ENCODE measurements at regions of chr9 and their contacts with region 1.

Region 1: GRCh38 chr9:35051069-35051967 is 21.1 kb downstream of the VCP start:
- DNase-seq: no peak
- ATAC-seq: peak; percentile 71
- H3K4me3 Mint-ChIP-seq: no peak overlapping the region
- H3K27ac Mint-ChIP-seq: no peak overlapping the region
- H3K4me1 Mint-ChIP-seq: peaks cover 5% of the 10 kb centered on the region
- H3K27me3 Mint-ChIP-seq: no peaks in the 10 kb centered on the region
- CTCF ChIP-seq: no peak

Region 2: GRCh38 chr9:34665381-34666250 is 385.7 kb before region 1 on chr9:
- CTCF ChIA-PET with region 1: no interaction called
- POLR2A ChIA-PET with region 1: no interaction called
- intact Hi-C with region 1: no loop called
- DNase-seq: peak; percentile 75
- ATAC-seq: peak; percentile 90
- H3K4me3 Mint-ChIP-seq: peak overlapping the region; percentile 88
- H3K27ac Mint-ChIP-seq: peak overlapping the region; percentile 87
- H3K4me1 Mint-ChIP-seq: peaks cover 11% of the 10 kb centered on the region
- H3K27me3 Mint-ChIP-seq: no peaks in the 10 kb centered on the region
- CTCF ChIP-seq: no peak

Region 3: GRCh38 chr9:34994260-34994899 is 56.9 kb before region 1 on chr9:
- CTCF ChIA-PET with region 1: interaction called, 13 read pairs
- POLR2A ChIA-PET with region 1: no interaction called
- intact Hi-C with region 1: loop called (anchors 1 kb)
- DNase-seq: no peak
- ATAC-seq: no peak
- H3K4me3 Mint-ChIP-seq: peak overlapping the region; percentile 46
- H3K27ac Mint-ChIP-seq: peak overlapping the region; percentile 78
- H3K4me1 Mint-ChIP-seq: peaks cover 47% of the 10 kb centered on the region
- H3K27me3 Mint-ChIP-seq: peaks cover 2% of the 10 kb centered on the region
- CTCF ChIP-seq: no peak

Region 4: DNA sequence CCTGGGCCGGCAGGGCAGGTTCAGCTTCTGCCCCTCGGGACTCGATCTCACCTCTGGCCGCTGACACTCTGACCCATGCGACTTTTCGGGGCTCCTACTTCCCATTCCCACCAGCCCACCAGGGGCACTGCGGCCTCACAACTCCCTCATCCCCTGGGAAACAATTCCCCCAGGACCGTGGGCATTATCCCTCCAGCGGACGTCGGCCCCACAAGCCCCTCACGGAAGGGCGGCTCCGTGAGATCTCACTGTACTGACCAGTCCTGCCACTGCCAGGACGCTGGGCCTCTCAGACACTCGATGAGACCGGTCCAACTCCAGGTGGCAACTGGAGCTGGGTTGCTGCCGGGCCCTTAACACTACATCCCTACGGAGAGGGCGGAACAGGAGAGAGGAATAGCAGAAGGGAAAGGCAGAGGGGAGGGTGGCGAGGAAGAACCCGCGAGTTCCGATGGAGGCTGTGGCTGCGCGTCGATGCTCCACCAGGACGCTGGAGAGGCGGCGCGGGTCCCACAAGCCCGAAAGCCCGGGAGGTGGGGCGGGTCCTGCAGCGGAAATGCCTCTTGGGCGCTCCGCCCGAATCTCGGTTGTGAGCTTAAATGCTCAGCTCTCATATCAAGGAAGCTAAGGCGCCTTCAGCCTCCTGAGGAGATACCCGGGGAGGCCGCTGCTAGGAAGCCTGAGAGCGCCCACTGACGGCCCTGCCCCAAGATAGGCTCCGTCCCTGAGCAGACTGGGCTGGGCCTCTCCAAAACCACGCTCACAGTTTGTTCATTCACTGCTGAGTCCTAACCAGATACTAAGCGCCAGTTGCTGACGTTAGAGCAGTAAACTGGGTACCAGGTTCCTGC is 15.2 kb before region 1 on chr9:
- CTCF ChIA-PET with region 1: interaction called, 3 read pairs
- POLR2A ChIA-PET with region 1: interaction called, 3 read pairs
- intact Hi-C with region 1: loop called (anchors 1 kb)
- DNase-seq: no peak
- ATAC-seq: peak; percentile 40
- H3K4me3 Mint-ChIP-seq: peak overlapping the region; percentile 50
- H3K27ac Mint-ChIP-seq: no peak overlapping the region
- H3K4me1 Mint-ChIP-seq: peaks cover 4% of the 10 kb centered on the region
- H3K27me3 Mint-ChIP-seq: no peaks in the 10 kb centered on the region
- CTCF ChIP-seq: no peak

Region 5: DNA sequence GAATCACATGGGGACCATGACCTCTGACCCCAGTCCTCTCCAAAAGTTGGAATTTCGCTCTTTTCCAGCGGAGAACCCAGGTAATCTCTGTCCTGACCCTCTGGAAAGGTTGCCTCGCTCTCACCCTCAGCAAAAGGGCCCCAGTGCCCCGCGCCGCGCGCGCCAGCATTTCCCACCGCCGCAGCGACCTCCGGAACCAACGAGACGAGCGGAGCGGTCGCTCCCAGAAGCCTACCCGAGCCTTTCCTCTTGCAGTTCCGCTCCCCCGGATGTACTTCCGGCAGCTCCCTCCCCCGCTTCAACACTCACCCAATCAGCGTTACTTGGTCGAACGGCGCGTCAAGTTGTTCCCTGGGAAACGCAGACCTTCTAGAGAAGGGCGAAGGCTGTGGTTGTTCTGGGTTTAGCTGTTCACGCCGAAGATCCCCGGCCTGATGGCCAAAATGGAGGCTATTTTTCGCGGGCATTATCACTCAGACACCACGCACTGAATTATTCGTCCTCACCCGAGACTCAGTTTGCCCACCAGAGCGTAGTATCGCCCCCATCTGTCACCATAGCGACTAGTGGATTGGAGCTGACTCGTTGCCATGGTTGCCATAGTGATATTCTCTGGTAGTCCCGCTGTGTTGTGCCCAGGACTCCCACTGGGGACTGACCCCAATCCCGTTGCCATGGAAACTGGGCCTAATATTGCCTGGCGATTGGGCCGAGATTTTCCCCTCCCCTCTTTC is 51.8 kb after region 1 on chr9 and contains the start of gene STOML2:
- CTCF ChIA-PET with region 1: no interaction called
- POLR2A ChIA-PET with region 1: no interaction called
- intact Hi-C with region 1: no loop called
- DNase-seq: peak; percentile 82
- ATAC-seq: peak; percentile 97
- H3K4me3 Mint-ChIP-seq: peak within 1 kb of the TSS; percentile 97
- H3K27ac Mint-ChIP-seq: peak within 1 kb of the TSS; percentile 97
- H3K4me1 Mint-ChIP-seq: peaks cover 25% of the 10 kb centered on the region
- H3K27me3 Mint-ChIP-seq: no peaks in the 10 kb centered on the region
- CTCF ChIP-seq: no peak
- total RNA-seq, gene STOML2: 108 and 113 TPM in 2 replicates

Region 6: DNA sequence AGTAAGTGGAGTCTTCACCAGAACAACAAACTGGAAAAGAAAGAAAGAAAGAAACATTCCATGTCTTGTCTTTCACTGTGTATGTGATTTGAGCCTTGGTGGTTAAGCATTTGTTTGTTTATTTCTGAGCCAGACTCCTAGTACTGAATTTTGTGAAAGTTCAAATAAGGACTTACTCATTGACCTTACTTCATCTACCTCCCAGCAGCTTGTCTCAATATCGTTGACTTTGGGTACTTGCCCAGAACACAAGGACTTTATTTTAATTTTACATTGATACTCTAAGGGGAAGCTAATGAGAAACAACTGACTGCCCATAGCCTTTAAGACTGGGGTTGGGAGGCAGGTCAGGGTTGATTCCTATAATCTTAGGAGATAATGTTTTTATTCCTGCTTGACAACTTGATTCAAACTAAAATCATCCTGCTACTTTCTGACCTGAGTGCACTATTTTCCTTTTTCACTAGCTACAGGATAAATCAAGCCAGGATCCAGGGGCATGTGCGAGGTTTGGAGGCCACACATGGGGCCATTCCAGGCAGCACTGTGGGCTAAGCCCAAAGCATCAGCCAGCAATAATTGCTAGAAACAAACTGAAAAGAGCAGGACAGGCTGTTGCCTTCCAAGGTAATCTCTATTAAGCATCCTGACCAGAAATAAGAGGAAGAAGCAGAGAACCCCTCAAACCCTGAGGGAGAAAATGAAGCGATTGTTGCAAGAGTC is 299.7 kb after region 1 on chr9:
- CTCF ChIA-PET with region 1: no interaction called
- POLR2A ChIA-PET with region 1: no interaction called
- intact Hi-C with region 1: no loop called
- DNase-seq: no peak
- ATAC-seq: no peak
- H3K4me3 Mint-ChIP-seq: no peak overlapping the region
- H3K27ac Mint-ChIP-seq: no peak overlapping the region
- H3K4me1 Mint-ChIP-seq: no peaks in the 10 kb centered on the region
- H3K27me3 Mint-ChIP-seq: peaks cover 3% of the 10 kb centered on the region
- CTCF ChIP-seq: no peak